ENCODE measurements at regions of chr2 and their contacts with region 1.

Region 1: DNA sequence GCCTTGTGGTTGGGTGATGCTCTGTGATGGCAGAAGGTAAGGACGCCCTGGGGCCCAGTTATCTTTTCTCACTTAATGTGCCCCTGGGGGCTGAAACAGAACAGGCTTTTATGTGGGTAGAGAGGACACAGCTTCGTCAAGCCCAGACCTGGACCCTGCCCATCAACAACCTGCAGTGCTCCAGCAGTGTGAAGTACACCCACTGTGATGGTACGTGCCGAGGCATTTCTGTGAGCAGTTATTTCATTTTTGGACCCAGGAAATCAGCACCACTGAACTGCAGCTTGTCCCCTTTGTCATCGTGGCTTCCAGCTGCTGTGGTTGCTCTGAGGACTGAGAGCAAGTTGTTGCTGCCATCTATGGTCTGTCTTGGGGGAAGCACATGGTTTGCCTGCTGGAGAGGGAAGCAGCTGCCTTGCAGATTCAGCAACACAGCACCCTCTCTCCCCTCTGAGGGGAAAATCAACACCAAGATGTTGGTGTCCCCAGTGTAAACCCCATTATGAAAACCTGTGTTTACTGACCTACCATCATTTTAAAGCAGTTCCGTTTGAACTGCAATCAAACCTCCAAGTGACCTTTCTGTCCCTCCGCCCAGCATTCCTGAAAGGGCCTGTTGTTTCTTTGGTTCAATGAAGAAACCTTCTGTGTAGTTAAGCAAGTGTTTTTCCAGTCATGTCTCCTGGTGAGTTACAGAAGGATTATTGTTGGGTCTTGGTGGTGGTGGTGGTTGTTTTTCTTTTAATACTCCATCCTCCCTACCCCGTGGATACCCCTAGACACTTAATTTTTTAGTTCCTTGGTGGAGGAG is 158.2 kb downstream of the MGAT5 start:
- DNase-seq: peak; percentile 73
- H3K4me3 ChIP-seq: no peak overlapping the region
- H3K27ac ChIP-seq: peak overlapping the region; percentile 56
- H3K4me1 ChIP-seq: peaks cover 45% of the 10 kb centered on the region
- H3K27me3 ChIP-seq: no peaks in the 10 kb centered on the region
- CTCF ChIP-seq: peak; percentile 61 to 77
- POLR2A ChIP-seq: no peak

Region 2: GRCh38 chr2:133886735-133887660 is 525.0 kb before region 1 on chr2:
- CTCF ChIA-PET with region 1: interaction called, 85 read pairs
- POLR2A ChIA-PET with region 1: no interaction called
- dilution Hi-C with region 1: no loop called
- intact Hi-C with region 1: loop called (anchors 1 kb)
- DNase-seq: peak; percentile 61
- H3K4me3 ChIP-seq: no peak overlapping the region
- H3K27ac ChIP-seq: no peak overlapping the region
- H3K4me1 ChIP-seq: peaks cover 6% of the 10 kb centered on the region
- H3K27me3 ChIP-seq: peaks cover 0 to 26% of the 10 kb centered on the region in 2 experiments
- CTCF ChIP-seq: peak; percentile 60 to 65
- POLR2A ChIP-seq: no peak

Region 3: GRCh38 chr2:134207564-134208209 is 204.3 kb before region 1 on chr2:
- CTCF ChIA-PET with region 1: interaction called, 37 read pairs
- POLR2A ChIA-PET with region 1: no interaction called
- dilution Hi-C with region 1: no loop called
- intact Hi-C with region 1: loop called (anchors 5 kb)
- DNase-seq: peak; percentile 69
- H3K4me3 ChIP-seq: no peak overlapping the region
- H3K27ac ChIP-seq: no peak overlapping the region
- H3K4me1 ChIP-seq: peaks cover 5% of the 10 kb centered on the region
- H3K27me3 ChIP-seq: no peaks in the 10 kb centered on the region
- CTCF ChIP-seq: peak; percentile 75 to 85
- POLR2A ChIP-seq: no peak

Region 4: GRCh38 chr2:134245340-134245984 is 166.6 kb before region 1 on chr2:
- CTCF ChIA-PET with region 1: interaction called, 60 read pairs
- POLR2A ChIA-PET with region 1: no interaction called
- dilution Hi-C with region 1: no loop called
- intact Hi-C with region 1: loop called (anchors 1 kb)
- DNase-seq: peak; percentile 57
- H3K4me3 ChIP-seq: no peak overlapping the region
- H3K27ac ChIP-seq: no peak overlapping the region
- H3K4me1 ChIP-seq: peaks cover 14% of the 10 kb centered on the region
- H3K27me3 ChIP-seq: no peaks in the 10 kb centered on the region
- CTCF ChIP-seq: peak; percentile 76
- POLR2A ChIP-seq: no peak

Region 5: DNA sequence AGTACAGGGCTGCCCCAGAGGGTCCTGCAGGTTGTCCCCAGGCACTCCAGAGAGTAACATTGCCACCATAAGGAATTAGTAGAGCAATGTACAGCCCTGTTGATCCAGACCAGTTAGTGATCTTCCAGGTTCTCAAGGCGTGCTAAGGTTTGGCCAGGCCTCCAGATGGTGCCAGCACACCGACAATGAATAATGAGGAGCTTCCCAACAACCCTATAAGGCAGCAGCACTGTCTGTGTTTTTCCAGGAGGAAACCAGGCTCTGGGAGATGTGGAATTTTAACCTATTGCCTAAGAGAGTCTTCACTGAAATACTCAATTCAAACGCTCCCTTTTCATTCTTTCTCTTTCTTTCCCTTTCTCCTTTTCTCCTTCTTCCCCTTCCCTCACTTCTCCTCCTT is 36.1 kb before region 1 on chr2:
- CTCF ChIA-PET with region 1: interaction called, 142 read pairs
- POLR2A ChIA-PET with region 1: no interaction called
- dilution Hi-C with region 1: no loop called
- intact Hi-C with region 1: loop called (anchors 1 kb)
- DNase-seq: peak; percentile 64
- H3K4me3 ChIP-seq: no peak overlapping the region
- H3K27ac ChIP-seq: no peak overlapping the region
- H3K4me1 ChIP-seq: peaks cover 6% of the 10 kb centered on the region
- H3K27me3 ChIP-seq: no peaks in the 10 kb centered on the region
- CTCF ChIP-seq: peak; percentile 30 to 46
- POLR2A ChIP-seq: no peak

Region 6: GRCh38 chr2:134425724-134426496 is 13.9 kb after region 1 on chr2:
- CTCF ChIA-PET with region 1: interaction called, 28 read pairs
- POLR2A ChIA-PET with region 1: interaction called, 5 read pairs
- dilution Hi-C with region 1: no loop called
- intact Hi-C with region 1: loop called (anchors 1 kb)
- DNase-seq: peak; percentile 60
- H3K4me3 ChIP-seq: no peak overlapping the region
- H3K27ac ChIP-seq: peak overlapping the region; percentile 76
- H3K4me1 ChIP-seq: peaks cover 37% of the 10 kb centered on the region
- H3K27me3 ChIP-seq: no peaks in the 10 kb centered on the region
- CTCF ChIP-seq: no peak
- POLR2A ChIP-seq: no peak

Region 7: GRCh38 chr2:134446383-134447017 is 34.5 kb after region 1 on chr2:
- CTCF ChIA-PET with region 1: interaction called, 139 read pairs
- POLR2A ChIA-PET with region 1: no interaction called
- dilution Hi-C with region 1: no loop called
- intact Hi-C with region 1: loop called (anchors 1 kb)
- DNase-seq: peak; percentile 90
- H3K4me3 ChIP-seq: no peak overlapping the region
- H3K27ac ChIP-seq: peak overlapping the region; percentile 45
- H3K4me1 ChIP-seq: peaks cover 43% of the 10 kb centered on the region
- H3K27me3 ChIP-seq: no peaks in the 10 kb centered on the region
- CTCF ChIP-seq: no peak
- POLR2A ChIP-seq: peak; percentile 33

Measured in endothelial cell of umbilical vein (primary cell).